Natural killer cell (primary cell): ENCODE measurements at regions of chr6 and their contacts with region 1.

Region 1: DNA sequence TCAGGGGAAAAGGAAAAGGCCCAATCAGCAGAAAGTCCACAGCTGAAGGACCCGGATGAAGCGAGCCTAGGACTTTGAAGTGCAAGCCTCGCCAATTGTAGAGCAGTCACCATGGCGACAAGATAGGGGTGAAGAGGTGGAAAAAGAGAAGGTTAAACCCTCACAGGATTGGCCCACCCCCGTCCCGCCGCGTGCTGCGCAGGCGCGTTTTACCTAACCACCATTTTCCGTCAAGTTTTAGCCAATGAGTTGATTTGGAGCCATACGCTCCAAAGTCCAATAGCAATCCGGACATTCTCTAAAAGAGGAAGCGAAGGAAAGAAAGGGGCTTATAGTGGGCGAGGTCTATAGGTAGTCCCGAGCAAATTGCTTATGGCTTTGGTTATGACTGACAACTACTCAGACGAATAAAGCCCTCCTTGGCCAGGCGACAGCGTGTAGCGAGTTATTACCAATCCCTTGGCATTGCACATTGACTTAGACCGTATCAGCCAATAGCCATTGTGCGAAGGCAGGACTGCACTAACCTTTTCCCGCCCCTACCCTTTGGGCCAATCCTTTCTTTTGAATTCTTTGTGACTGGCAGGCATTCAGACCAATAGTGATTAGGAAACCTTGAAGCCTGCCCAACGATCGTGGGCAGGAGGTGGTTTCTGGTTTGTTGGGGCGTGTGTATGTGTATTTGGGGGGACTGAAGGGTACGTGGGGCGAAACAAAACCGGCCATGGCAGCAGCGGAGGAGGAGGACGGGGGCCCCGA is at the start of gene RNF5:
- DNase-seq: peak; percentile 78 to 99
- ATAC-seq: peak; percentile 81 to 93 (median 83)
- H3K4me3 ChIP-seq: peak within 1 kb of the TSS; percentile 75
- H3K4me3 Mint-ChIP-seq: peak within 1 kb of the TSS; percentile 97
- H3K27ac ChIP-seq: peak within 1 kb of the TSS; percentile 97
- H3K27ac Mint-ChIP-seq: peak within 1 kb of the TSS; percentile 97
- H3K4me1 ChIP-seq: peaks cover 43% of the 10 kb centered on the region
- H3K4me1 Mint-ChIP-seq: peaks cover 68 to 86% of the 10 kb centered on the region in 2 donors
- H3K27me3 ChIP-seq: no peaks in the 10 kb centered on the region
- H3K27me3 Mint-ChIP-seq: no peaks in the 10 kb centered on the region
- CTCF ChIP-seq: no peak
- total RNA-seq, gene RNF5: 35.1 to 39.2 (median 36.6) TPM

Region 2: DNA sequence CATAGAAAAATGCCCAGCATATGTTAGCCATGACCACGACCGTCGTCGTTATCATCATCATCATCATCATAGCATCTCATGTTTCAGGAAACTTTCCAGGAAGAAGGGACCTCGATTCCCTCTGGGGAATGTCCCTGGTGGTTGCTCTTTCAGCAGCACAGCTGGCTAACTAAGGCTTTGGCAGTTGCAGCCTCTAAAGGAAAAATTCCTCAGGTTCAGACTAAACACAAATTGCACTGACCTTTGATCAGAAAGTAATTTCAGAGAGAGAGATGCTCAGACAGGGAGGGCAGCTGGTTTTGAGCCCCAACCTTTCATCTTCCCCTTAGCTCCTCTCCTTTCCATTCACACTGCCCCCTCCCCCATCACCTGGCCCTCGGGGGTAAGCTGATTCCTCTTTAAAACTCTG is 237.7 kb before region 1 on chr6:
- intact Hi-C with region 1: no loop called
- DNase-seq: no peak
- ATAC-seq: no peak
- H3K4me3 ChIP-seq: no peak overlapping the region
- H3K4me3 Mint-ChIP-seq: no peak overlapping the region
- H3K27ac ChIP-seq: no peak overlapping the region
- H3K27ac Mint-ChIP-seq: no peak overlapping the region
- H3K4me1 ChIP-seq: no peaks in the 10 kb centered on the region
- H3K4me1 Mint-ChIP-seq: no peaks in the 10 kb centered on the region
- H3K27me3 ChIP-seq: peaks cover 3% of the 10 kb centered on the region
- H3K27me3 Mint-ChIP-seq: peaks cover 9 to 13% of the 10 kb centered on the region in 2 donors
- CTCF ChIP-seq: no peak

Region 3: DNA sequence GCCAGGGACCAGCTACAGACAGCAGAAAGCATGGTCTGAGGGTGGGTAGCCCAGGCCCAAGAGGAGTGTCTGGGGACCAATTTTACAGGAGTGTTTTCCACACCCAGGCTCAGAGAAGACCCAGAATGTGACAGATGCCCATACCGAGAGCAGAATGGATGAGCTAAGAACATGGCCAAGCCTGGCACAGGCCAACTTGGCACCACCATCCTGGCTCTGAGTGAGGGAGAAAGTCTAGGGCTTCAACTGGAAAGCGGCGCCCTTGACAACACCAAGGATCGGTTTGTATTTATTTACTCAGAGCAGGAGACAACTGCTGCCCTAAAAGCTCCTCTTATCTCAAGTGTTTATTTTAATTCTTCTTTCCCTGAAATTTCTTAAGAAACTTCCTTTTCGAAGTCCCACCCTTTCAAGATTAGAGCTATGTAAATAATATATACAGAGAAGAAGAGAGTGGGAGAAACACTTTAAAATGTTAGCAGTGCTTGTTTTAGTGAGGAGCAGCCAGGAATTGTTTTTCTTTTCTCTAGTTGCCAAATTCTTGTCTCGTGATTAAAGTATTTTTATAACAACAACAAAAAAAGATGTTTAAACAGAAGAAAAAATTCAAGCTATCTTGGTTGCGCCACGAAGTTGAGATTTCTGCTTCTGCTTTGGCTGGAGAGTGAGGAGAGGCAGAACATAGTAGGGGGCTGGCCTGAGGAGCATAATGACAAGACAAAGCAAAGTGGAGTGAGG is 85.0 kb before region 1 on chr6:
- intact Hi-C with region 1: no loop called
- DNase-seq: no peak
- ATAC-seq: no peak
- H3K4me3 ChIP-seq: no peak overlapping the region
- H3K4me3 Mint-ChIP-seq: no peak overlapping the region
- H3K27ac ChIP-seq: no peak overlapping the region
- H3K27ac Mint-ChIP-seq: no peak overlapping the region
- H3K4me1 ChIP-seq: no peaks in the 10 kb centered on the region
- H3K4me1 Mint-ChIP-seq: peaks cover 0 to 4% of the 10 kb centered on the region in 2 donors
- H3K27me3 ChIP-seq: peaks cover 14% of the 10 kb centered on the region
- H3K27me3 Mint-ChIP-seq: peaks cover 26 to 32% of the 10 kb centered on the region in 2 donors
- CTCF ChIP-seq: no peak

Region 4: DNA sequence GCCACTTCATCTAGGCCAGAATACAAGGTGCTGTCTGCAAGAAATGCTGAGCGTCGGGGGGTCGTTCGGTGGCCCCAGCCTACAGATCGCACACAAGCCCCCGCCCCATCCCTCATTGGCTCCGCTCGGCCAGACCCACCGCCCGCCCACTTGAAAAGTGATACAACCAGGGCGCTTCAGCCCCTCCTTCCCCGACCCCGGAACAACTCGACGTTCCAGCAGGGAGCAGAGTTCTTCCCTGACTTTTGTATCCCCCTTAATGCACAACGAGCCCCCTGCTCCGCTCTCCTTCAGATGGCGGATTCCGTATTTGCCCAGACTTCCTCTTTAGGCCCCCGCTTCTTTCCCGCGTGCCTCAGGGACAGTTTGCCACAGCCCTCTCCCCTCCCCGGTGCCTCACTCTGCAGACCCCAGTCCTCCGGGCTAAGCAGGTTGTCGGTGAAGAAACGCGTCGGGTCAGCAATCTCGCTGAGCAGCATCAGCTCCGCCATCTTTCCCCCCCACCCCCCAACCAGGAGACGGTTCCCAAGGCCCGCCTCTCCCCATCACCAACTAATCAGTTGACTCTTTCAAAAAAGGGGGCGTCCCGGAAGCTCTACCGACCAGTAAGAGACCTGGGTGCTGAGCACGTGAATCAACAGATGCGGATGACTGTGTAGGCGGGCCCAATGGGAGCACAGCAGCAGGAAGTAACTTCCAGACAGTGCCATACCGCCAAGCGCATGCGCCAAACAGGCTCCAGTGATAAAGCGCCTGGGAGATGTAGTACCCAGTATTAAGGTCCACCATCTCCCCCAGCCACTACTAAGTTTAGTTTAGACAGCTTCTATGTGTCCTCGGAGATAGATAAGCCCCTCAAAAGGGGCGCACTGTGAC is 50.0 kb before region 1 on chr6 and contains the start of gene ATF6B:
- intact Hi-C with region 1: loop called (anchors 1 kb)
- DNase-seq: peak; percentile 91 to 100
- ATAC-seq: peak; percentile 92 to 99 (median 96)
- H3K4me3 ChIP-seq: peak within 1 kb of the TSS; percentile 98
- H3K4me3 Mint-ChIP-seq: peak within 1 kb of the TSS; percentile 94
- H3K27ac ChIP-seq: peak within 1 kb of the TSS; percentile 85
- H3K27ac Mint-ChIP-seq: peak within 1 kb of the TSS; percentile 93 to 98
- H3K4me1 ChIP-seq: peaks cover 37% of the 10 kb centered on the region
- H3K4me1 Mint-ChIP-seq: peaks cover 51 to 56% of the 10 kb centered on the region in 2 donors
- H3K27me3 ChIP-seq: no peaks in the 10 kb centered on the region
- H3K27me3 Mint-ChIP-seq: no peaks in the 10 kb centered on the region
- CTCF ChIP-seq: no peak
- total RNA-seq, gene ATF6B: 157 to 187 (median 178) TPM

Region 5: GRCh38 chr6:32148289-32149091 is 29.5 kb before region 1 on chr6:
- intact Hi-C with region 1: loop called (anchors 1 kb)
- DNase-seq: peak; percentile 78 to 86
- ATAC-seq: peak; percentile 90 to 94 (median 94)
- H3K4me3 ChIP-seq: peak overlapping the region; percentile 29
- H3K4me3 Mint-ChIP-seq: peak overlapping the region; percentile 91
- H3K27ac ChIP-seq: peak overlapping the region; percentile 8
- H3K27ac Mint-ChIP-seq: peak overlapping the region; percentile 80 to 91
- H3K4me1 ChIP-seq: peaks cover 32% of the 10 kb centered on the region
- H3K4me1 Mint-ChIP-seq: peaks cover 32 to 52% of the 10 kb centered on the region in 2 donors
- H3K27me3 ChIP-seq: peaks cover 21% of the 10 kb centered on the region
- H3K27me3 Mint-ChIP-seq: peaks cover 20 to 37% of the 10 kb centered on the region in 2 donors
- CTCF ChIP-seq: peak; percentile 50

Region 6: DNA sequence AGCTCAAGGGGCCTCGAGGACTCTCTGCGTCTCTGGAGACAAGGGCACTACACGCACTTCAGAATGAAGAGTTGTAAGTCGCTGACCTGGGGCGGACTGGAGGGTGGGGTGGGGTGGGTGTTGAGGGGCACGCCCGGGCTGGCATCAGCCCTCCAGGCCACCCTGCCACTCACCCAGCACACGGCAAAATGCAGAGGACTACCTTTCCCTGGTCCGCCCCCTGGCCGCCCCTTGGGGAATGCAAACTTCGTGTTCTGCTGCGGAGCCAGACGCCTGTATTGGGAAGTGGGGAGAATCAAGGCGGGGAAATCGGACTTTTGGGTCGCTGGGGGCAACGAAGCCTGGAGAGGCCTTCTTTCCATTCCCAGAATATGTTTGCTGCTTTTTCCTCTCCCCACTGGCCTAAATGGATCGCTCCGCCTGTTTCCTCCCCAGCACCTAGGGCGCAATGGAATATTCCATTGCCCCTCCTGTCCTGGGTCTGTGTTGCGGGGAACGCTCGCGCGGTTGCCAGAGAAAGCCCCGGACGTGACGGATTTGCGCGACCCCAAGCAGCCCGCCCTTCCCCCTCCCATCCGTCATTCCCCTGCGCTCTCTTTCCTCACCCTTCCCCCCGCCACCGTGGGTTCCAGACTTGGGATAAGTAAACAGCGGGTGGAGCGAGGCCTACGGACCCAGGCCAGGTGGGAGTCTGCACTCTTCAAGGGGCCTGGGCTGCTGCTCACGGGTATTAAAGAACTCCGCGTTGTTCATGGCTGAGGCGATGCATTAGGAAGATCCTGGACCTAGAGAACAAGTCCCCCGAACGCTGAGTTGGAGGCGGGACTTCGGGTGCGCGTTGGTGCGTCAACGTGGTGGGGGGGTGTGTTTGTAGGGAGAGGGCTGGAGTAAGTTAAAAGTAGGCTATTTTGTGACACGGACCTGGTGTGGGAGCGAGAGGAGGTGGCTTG is 24.1 kb before region 1 on chr6 and contains the start of gene PPT2:
- intact Hi-C with region 1: loop called (anchors 1 kb)
- DNase-seq: peak; percentile 74 to 90
- ATAC-seq: peak; percentile 74 to 84 (median 78)
- H3K4me3 ChIP-seq: peak within 1 kb of the TSS; percentile 68
- H3K4me3 Mint-ChIP-seq: peak within 1 kb of the TSS; percentile 96
- H3K27ac ChIP-seq: peak within 1 kb of the TSS; percentile 68
- H3K27ac Mint-ChIP-seq: peak within 1 kb of the TSS; percentile 90 to 98
- H3K4me1 ChIP-seq: peaks cover 37% of the 10 kb centered on the region
- H3K4me1 Mint-ChIP-seq: peaks cover 38 to 49% of the 10 kb centered on the region in 2 donors
- H3K27me3 ChIP-seq: peaks cover 12% of the 10 kb centered on the region
- H3K27me3 Mint-ChIP-seq: peaks cover 10 to 19% of the 10 kb centered on the region in 2 donors
- CTCF ChIP-seq: no peak
- total RNA-seq, gene PPT2: 16.3 to 28.3 (median 19.0) TPM

Region 7: DNA sequence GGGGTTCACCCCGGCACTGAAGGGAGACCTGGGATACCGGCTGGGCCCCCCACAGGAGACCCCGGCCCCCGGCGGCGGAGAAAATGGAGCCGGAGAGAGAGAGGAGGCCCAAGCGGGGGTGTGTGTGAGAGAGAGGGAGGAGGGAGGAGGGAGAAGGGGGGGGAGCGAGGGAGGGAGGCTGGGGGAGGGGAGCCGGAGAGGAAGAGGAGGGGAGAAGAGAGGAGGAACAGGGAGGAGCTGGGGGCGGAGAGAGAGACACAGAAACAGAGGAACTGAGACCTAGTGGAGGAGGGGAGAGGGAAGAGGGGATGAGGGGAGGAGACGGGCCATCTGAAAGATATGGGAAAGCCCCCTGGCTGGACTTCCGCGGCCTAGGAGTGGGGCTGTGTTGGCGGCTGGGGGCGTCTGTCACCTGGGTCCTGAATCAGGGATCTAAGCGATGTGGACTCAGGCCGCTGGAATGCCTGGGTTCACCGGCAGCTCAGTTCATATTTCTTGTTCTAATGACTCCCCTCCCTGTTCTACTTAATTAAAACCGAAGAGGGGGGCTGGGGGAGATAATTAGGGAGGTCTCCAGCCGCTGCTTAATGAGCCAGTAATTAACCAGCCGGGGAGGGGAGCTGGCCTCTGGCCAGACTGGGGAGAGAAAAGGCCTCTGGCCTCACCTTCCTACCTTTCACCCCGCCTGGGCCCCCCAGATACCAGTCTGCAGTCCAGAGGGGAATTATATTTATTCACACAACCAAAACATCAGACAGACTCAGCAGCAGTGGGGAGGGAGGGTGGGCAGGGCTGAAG is 12.3 kb after region 1 on chr6 and contains the start of gene PBX2:
- intact Hi-C with region 1: loop called (anchors 1 kb)
- DNase-seq: peak; percentile 61 to 91
- ATAC-seq: peak; percentile 73 to 86 (median 76)
- H3K4me3 ChIP-seq: peak within 1 kb of the TSS; percentile 69
- H3K4me3 Mint-ChIP-seq: peak within 1 kb of the TSS; percentile 94
- H3K27ac ChIP-seq: peak within 1 kb of the TSS; percentile 99
- H3K27ac Mint-ChIP-seq: peak within 1 kb of the TSS; percentile 99
- H3K4me1 ChIP-seq: peaks cover 81% of the 10 kb centered on the region
- H3K4me1 Mint-ChIP-seq: peaks cover 64 to 86% of the 10 kb centered on the region in 2 donors
- H3K27me3 ChIP-seq: no peaks in the 10 kb centered on the region
- H3K27me3 Mint-ChIP-seq: no peaks in the 10 kb centered on the region
- CTCF ChIP-seq: no peak
- total RNA-seq, gene PBX2: 111 to 116 (median 112) TPM

Region 8: GRCh38 chr6:32195652-32195901 is 17.6 kb after region 1 on chr6:
- intact Hi-C with region 1: loop called (anchors 1 kb)
- DNase-seq: peak; percentile 99
- ATAC-seq: peak; percentile 79 to 94 (median 82)
- H3K4me3 ChIP-seq: no peak overlapping the region
- H3K4me3 Mint-ChIP-seq: peak overlapping the region; percentile 98
- H3K27ac ChIP-seq: peak overlapping the region; percentile 100
- H3K27ac Mint-ChIP-seq: peak overlapping the region; percentile 99
- H3K4me1 ChIP-seq: peaks cover 61% of the 10 kb centered on the region
- H3K4me1 Mint-ChIP-seq: peaks cover 46 to 67% of the 10 kb centered on the region in 2 donors
- H3K27me3 ChIP-seq: no peaks in the 10 kb centered on the region
- H3K27me3 Mint-ChIP-seq: no peaks in the 10 kb centered on the region
- CTCF ChIP-seq: peak; percentile 36

Region 9: DNA sequence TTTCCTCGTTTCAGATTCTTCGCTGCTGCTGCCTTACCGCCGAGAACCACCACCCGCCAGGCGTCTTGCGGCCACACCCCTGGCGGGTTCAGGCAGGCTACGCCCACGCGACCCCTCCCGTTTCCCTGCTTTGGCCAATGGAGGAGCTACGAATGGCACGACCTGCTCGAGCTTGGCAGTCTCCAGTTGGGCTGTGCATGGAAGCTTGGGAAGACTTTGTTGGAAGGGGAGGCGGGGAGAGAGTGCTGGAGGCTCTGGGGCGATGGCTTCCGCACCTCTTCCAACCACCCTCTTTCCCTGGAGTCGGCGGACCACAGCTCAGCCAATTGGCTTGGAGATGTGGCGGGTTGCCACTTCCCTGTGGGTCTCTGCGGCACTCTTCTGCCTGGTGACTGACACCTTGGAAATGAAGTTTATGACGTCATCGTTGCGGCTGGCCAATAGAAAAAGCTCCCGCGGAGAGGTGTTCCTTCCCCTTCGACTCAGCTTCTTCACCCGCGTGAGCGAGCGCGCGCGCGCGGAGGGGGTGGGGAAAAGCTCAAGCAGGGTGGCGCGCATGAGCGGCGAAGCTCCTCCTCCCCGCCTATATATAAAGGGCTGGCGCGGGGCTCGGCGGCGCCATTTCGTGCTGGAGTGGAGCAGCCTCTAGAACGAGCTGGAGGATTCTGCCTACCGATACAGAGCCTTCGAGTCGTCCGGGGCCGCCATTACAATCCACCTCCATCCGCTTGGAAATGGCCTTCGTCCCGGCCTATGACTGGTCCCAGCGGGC is 793.8 kb after region 1 on chr6:
- intact Hi-C with region 1: loop called (anchors 5 kb)
- DNase-seq: peak; percentile 100
- ATAC-seq: peak; percentile 48 to 76 (median 62)
- H3K4me3 ChIP-seq: peak overlapping the region; percentile 91
- H3K4me3 Mint-ChIP-seq: peak overlapping the region; percentile 96
- H3K27ac ChIP-seq: peak overlapping the region; percentile 92
- H3K27ac Mint-ChIP-seq: peak overlapping the region; percentile 91 to 97
- H3K4me1 ChIP-seq: peaks cover 39% of the 10 kb centered on the region
- H3K4me1 Mint-ChIP-seq: peaks cover 77 to 85% of the 10 kb centered on the region in 2 donors
- H3K27me3 ChIP-seq: no peaks in the 10 kb centered on the region
- H3K27me3 Mint-ChIP-seq: no peaks in the 10 kb centered on the region
- CTCF ChIP-seq: no peak